Activated CD4-positive, alpha-beta T cell treated with anti-CD3 and anti-CD28 coated beads for 36 hours (primary cell): ENCODE measurements at regions of chr6 and their contacts with region 1.

Region 1: GRCh38 chr6:158231551-158232315 is 63.6 kb downstream of the GTF2H5 start:
- DNase-seq: peak; percentile 83
- ATAC-seq: peak; percentile 79
- H3K4me3 Mint-ChIP-seq: peak overlapping the region; percentile 86
- H3K27ac Mint-ChIP-seq: peak overlapping the region; percentile 88
- H3K4me1 Mint-ChIP-seq: peaks cover 30% of the 10 kb centered on the region
- H3K27me3 Mint-ChIP-seq: no peaks in the 10 kb centered on the region

Region 2: DNA sequence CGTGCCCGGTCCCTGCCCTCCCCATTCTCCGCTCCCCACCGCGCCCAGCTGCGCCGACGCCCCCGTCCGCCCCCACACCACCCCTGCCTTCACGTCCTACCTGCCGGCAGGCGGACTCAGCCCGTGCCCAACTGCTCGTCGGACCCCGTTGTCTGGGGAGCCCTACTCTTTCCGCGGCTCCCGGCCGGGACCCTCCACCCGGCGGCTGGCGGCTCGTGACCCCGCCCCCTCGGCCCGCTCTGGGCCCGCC is 63.8 kb before region 1 on chr6 and contains the start of gene SERAC1:
- CTCF ChIA-PET with region 1: no interaction called
- POLR2A ChIA-PET with region 1: no interaction called
- intact Hi-C with region 1: loop called in 1 of 2 experiments (anchors 1 kb)
- DNase-seq: no peak
- ATAC-seq: peak; percentile 30
- H3K4me3 Mint-ChIP-seq: peak within 1 kb of the TSS; percentile 89
- H3K27ac Mint-ChIP-seq: peak within 1 kb of the TSS; percentile 95
- H3K4me1 Mint-ChIP-seq: peaks cover 21% of the 10 kb centered on the region
- H3K27me3 Mint-ChIP-seq: no peaks in the 10 kb centered on the region
- total RNA-seq, gene SERAC1: 3.9 to 5.7 TPM

Region 3: DNA sequence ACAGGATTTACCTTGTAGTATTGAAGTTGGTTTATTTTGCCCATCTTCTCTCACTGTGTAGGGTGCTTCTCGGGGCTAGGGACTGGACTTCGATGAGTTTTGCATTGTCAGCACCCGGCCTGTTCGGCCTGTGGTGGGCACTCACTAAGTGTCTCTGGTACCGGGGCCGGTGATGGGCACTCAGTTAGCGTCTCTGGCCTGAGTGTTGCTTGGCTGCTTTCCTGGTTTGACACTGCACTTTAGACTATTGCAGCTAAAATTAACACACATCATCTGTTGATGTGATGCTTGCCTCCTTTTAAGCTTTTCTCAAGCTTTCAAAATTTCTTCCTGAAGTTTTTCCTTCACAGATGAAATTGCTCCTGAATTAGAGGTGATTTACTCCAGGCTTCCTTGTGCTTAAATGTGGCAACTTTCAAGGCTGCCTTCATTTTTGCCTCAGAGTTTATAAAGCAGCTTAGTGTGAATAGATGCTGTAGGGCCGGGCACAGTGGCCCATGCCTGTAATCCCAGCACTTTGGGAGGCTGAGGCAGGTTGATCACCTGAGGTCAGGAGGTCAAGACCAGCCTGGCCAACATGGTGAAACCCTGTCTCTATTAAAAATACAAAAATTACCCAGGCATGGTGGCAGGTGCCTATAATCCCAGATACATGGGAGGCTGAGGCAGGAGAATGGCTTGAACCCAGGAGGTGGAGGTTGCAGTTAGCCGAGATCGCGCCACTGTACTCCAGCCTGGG is 38.8 kb after region 1 on chr6:
- CTCF ChIA-PET with region 1: no interaction called
- POLR2A ChIA-PET with region 1: no interaction called
- intact Hi-C with region 1: loop called (anchors 1 to 5 kb)
- DNase-seq: peak; percentile 45
- ATAC-seq: no peak
- H3K4me3 Mint-ChIP-seq: peak overlapping the region; percentile 15
- H3K27ac Mint-ChIP-seq: no peak overlapping the region
- H3K4me1 Mint-ChIP-seq: peaks cover 29% of the 10 kb centered on the region
- H3K27me3 Mint-ChIP-seq: no peaks in the 10 kb centered on the region

Region 4: GRCh38 chr6:158290659-158291058 is 58.9 kb after region 1 on chr6:
- CTCF ChIA-PET with region 1: no interaction called
- POLR2A ChIA-PET with region 1: no interaction called
- intact Hi-C with region 1: loop called (anchors 1 to 5 kb)
- DNase-seq: peak; percentile 80
- ATAC-seq: peak; percentile 100
- H3K4me3 Mint-ChIP-seq: peak overlapping the region; percentile 58
- H3K27ac Mint-ChIP-seq: peak overlapping the region; percentile 87
- H3K4me1 Mint-ChIP-seq: peaks cover 37% of the 10 kb centered on the region
- H3K27me3 Mint-ChIP-seq: no peaks in the 10 kb centered on the region

Region 5: GRCh38 chr6:158926416-158926815 is 694.7 kb after region 1 on chr6:
- CTCF ChIA-PET with region 1: no interaction called
- POLR2A ChIA-PET with region 1: no interaction called
- intact Hi-C with region 1: no loop called
- DNase-seq: no peak
- ATAC-seq: no peak
- H3K4me3 Mint-ChIP-seq: no peak overlapping the region
- H3K27ac Mint-ChIP-seq: no peak overlapping the region
- H3K4me1 Mint-ChIP-seq: no peaks in the 10 kb centered on the region
- H3K27me3 Mint-ChIP-seq: no peaks in the 10 kb centered on the region